BJ (cell line): ENCODE measurements at regions of chr5 and their contacts with region 1.

Region 1: DNA sequence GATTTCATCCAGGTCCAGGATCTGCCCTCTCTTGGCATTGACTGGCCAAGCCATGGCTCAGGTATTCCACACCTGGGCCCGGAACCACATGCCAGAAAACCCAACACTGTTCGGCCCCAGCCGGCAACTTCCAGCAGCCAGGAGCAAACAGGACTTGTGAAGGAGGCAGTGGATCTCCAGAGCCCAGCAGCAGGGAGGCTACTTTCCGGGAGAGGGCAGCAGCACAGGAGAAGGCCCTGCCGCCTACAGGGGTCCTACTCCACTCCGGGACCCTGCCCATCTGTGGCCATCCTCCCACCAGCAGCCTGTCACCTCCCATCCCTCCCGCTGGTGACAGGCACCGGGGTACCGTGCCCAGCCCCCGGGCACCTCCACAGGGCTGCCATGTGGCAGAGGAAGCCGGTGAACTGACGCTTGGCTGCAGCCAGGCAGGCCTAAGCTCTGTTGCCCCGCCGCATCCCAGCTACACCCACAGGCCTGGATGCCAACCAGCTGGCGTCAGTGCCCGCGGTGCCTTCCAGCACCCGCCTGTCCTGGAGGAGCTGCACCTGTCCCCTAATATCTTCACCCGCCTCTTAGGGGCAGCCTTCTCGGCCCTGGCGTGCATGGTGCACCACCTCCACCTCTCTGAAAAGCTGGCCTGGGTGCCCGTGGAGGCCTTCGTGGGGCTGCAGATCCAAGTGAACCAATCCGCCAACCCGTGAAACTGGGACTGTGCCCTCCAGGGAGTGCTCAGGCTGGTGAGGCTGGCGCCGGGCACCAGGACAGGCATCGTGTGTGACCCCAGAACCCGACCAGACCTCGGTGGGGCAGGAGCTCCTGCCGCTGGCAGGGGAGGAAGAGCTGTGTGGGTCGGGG is 18.9 kb upstream of the SLC30A5 start:
- DNase-seq: no peak
- H3K4me3 ChIP-seq: no peak overlapping the region
- H3K27me3 ChIP-seq: no peaks in the 10 kb centered on the region
- CTCF ChIP-seq: no peak

Region 2: GRCh38 chr5:68911840-68912690 is 162.8 kb before region 1 on chr5:
- CTCF ChIA-PET with region 1: no interaction called
- POLR2A ChIA-PET with region 1: no interaction called
- DNase-seq: peak; percentile 20
- H3K4me3 ChIP-seq: no peak overlapping the region
- H3K27me3 ChIP-seq: no peaks in the 10 kb centered on the region
- CTCF ChIP-seq: no peak

Region 3: GRCh38 chr5:68973696-68974095 is 101.2 kb before region 1 on chr5:
- CTCF ChIA-PET with region 1: no interaction called
- POLR2A ChIA-PET with region 1: no interaction called
- DNase-seq: no peak
- H3K4me3 ChIP-seq: no peak overlapping the region
- H3K27me3 ChIP-seq: peaks cover 2% of the 10 kb centered on the region
- CTCF ChIP-seq: no peak

Region 4: DNA sequence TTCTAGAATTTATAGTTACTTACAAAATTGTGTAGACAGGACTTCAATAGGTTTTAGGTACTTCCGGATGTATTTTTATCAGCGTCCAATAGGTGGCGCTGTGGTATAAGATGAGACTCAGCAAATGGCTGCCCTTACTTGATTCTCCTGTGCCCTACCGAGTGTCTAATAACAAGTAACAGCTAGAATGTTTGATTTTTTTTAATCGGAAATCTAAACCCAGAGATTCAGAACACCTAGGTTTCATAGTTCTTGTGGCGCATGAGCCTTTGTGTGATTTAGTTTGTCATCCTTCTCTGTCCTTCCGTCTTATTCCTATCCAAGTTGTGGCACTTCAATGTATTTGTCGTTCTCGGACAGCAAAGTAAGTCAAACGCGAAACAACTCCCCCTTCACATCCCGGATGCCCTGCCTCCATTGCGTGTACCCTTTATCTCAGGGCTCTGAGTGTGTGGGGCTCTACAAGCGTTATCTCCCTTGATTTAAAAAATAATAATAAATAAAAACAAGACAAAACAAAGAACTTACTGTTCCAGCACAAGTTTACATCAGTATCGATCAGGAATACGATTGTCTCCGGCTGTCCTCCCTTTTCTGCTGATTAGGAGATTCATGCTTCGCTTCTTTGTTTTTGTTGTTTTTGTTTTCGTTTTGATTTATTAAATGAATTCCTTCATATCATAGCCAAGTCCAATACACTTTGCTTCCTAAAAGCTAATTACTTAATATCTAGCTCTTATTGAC is 31.8 kb before region 1 on chr5:
- CTCF ChIA-PET with region 1: no interaction called
- POLR2A ChIA-PET with region 1: no interaction called
- DNase-seq: peak; percentile 58
- H3K4me3 ChIP-seq: peak overlapping the region; percentile 41
- H3K27me3 ChIP-seq: no peaks in the 10 kb centered on the region
- CTCF ChIP-seq: peak; percentile 73

Region 5: GRCh38 chr5:69113851-69114250 is 39.0 kb after region 1 on chr5:
- CTCF ChIA-PET with region 1: no interaction called
- POLR2A ChIA-PET with region 1: interaction called, 11 read pairs
- DNase-seq: no peak
- H3K4me3 ChIP-seq: no peak overlapping the region
- H3K27me3 ChIP-seq: no peaks in the 10 kb centered on the region
- CTCF ChIP-seq: no peak